Mammary epithelial cell (primary cell): ENCODE measurements at regions of chr17 and their contacts with region 1.

Region 1: GRCh38 chr17:17356149-17356930 is 53.2 kb downstream of the NT5M start:
- DNase-seq: peak; percentile 64
- H3K4me3 ChIP-seq: no peak overlapping the region
- H3K27ac ChIP-seq: no peak overlapping the region
- H3K4me1 ChIP-seq: no peaks in the 10 kb centered on the region
- H3K27me3 ChIP-seq: no peaks in the 10 kb centered on the region
- CTCF ChIP-seq: peak; percentile 100

Region 2: DNA sequence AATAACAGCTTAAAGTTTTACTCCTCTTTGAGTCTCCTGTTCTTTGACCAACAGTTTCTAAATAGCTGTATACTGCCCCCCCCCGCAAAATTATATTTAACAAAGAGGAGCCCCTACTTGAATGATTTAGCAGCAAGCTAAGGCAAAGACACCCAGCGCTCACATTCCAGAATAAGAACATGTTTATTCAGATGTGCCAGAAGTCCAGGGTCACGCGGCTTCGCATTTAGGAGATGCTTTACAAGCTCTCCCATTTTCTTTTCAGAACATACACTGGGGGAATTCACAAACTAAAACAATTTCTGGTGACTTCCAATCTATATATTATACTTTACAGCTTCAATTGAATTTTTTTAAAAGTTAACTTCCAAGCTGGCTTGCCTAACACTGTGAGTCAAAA is 155.5 kb before region 1 on chr17:
- CTCF ChIA-PET with region 1: no interaction called
- dilution Hi-C with region 1: no loop called
- in situ Hi-C with region 1: no loop called
- intact Hi-C with region 1: no loop called
- DNase-seq: no peak
- H3K4me3 ChIP-seq: no peak overlapping the region
- H3K27ac ChIP-seq: no peak overlapping the region
- H3K4me1 ChIP-seq: peaks cover 19% of the 10 kb centered on the region
- H3K27me3 ChIP-seq: no peaks in the 10 kb centered on the region
- CTCF ChIP-seq: no peak

Region 3: DNA sequence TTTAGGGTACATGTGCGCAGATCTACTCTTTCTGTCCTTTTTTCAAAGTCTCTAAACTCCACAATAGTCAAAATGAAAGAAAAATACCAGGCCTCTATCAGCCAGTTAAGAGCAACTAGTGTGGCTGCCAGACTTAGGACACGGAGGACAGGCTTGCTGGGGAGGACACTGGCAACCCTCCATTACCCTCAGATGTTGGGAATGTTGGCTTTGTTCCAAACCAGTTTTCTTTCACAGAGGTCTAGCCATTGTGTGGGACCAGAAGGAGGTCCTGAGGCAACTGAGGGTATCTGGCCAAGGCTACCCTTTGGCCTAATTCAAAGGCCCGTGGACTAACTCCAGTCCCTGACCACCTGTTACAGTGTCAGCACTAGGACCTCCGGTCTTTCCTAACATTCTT is 69.3 kb after region 1 on chr17:
- CTCF ChIA-PET with region 1: no interaction called
- dilution Hi-C with region 1: loop called (anchors 5 kb)
- in situ Hi-C with region 1: no loop called
- intact Hi-C with region 1: no loop called
- DNase-seq: no peak
- H3K4me3 ChIP-seq: no peak overlapping the region
- H3K27ac ChIP-seq: no peak overlapping the region
- H3K4me1 ChIP-seq: no peaks in the 10 kb centered on the region
- H3K27me3 ChIP-seq: peaks cover 3% of the 10 kb centered on the region
- CTCF ChIP-seq: no peak

Region 4: GRCh38 chr17:17568749-17569195 is 212.4 kb after region 1 on chr17:
- CTCF ChIA-PET with region 1: no interaction called
- dilution Hi-C with region 1: no loop called
- in situ Hi-C with region 1: loop called in 1 of 2 experiments (anchors 10 kb)
- intact Hi-C with region 1: loop called (anchors 1 kb)
- DNase-seq: peak; percentile 28
- H3K4me3 ChIP-seq: no peak overlapping the region
- H3K27ac ChIP-seq: no peak overlapping the region
- H3K4me1 ChIP-seq: no peaks in the 10 kb centered on the region
- H3K27me3 ChIP-seq: no peaks in the 10 kb centered on the region
- CTCF ChIP-seq: peak; percentile 75 to 92

Region 5: GRCh38 chr17:17641621-17642409 is 285.5 kb after region 1 on chr17:
- CTCF ChIA-PET with region 1: no interaction called
- dilution Hi-C with region 1: no loop called
- in situ Hi-C with region 1: loop called (anchors 5 kb)
- intact Hi-C with region 1: loop called (anchors 1 kb)
- DNase-seq: peak; percentile 54
- H3K4me3 ChIP-seq: no peak overlapping the region
- H3K27ac ChIP-seq: no peak overlapping the region
- H3K4me1 ChIP-seq: peaks cover 3% of the 10 kb centered on the region
- H3K27me3 ChIP-seq: no peaks in the 10 kb centered on the region
- CTCF ChIP-seq: peak; percentile 85 to 90

Region 6: DNA sequence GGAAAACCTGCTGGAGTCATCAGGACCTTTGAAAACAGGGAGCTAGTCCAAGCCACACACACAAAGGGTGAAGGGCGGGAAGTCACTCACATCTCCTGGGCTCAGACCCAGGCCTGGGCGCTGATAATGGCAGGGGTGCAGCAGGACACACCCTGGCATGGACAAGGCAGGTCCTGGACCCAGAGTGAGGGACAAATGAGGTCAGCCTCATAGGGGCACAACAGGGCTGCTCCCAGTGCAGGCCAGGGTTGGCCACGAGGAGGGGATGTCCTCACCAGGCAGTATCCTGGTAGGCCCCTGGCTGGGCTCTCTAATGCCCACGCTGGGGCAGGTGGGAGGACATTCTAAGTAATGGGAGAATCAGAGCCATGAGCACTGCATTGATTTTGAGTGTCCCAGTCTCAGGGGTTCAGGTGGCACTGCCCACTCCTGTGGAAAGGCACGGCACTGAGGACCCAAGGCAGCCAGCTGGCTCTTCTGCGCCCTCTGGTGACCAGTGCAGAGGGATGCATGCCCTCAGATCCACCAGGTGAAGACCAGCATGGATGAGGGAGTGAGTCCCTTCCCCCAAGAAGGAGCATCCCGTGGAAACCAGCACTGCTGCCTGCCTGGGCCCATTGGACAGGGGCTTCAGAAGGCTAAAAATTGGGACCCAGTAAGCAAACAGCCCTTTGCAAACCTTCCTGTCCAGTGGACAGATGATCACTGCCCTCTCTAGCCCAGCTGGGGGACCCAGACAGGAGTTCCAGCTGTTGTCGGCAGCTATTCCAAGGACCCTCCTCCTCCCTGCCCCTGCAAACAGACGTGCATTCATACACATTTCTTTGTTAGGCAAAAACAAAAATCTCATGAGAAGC is 503.8 kb after region 1 on chr17:
- CTCF ChIA-PET with region 1: no interaction called
- dilution Hi-C with region 1: no loop called
- in situ Hi-C with region 1: no loop called
- intact Hi-C with region 1: loop called (anchors 5 kb)
- DNase-seq: peak; percentile 43
- H3K4me3 ChIP-seq: no peak overlapping the region
- H3K27ac ChIP-seq: no peak overlapping the region
- H3K4me1 ChIP-seq: peaks cover 21% of the 10 kb centered on the region
- H3K27me3 ChIP-seq: no peaks in the 10 kb centered on the region
- CTCF ChIP-seq: peak; percentile 94 to 98